ENCODE measurements at regions of chr5 and their contacts with region 1.

Region 1: DNA sequence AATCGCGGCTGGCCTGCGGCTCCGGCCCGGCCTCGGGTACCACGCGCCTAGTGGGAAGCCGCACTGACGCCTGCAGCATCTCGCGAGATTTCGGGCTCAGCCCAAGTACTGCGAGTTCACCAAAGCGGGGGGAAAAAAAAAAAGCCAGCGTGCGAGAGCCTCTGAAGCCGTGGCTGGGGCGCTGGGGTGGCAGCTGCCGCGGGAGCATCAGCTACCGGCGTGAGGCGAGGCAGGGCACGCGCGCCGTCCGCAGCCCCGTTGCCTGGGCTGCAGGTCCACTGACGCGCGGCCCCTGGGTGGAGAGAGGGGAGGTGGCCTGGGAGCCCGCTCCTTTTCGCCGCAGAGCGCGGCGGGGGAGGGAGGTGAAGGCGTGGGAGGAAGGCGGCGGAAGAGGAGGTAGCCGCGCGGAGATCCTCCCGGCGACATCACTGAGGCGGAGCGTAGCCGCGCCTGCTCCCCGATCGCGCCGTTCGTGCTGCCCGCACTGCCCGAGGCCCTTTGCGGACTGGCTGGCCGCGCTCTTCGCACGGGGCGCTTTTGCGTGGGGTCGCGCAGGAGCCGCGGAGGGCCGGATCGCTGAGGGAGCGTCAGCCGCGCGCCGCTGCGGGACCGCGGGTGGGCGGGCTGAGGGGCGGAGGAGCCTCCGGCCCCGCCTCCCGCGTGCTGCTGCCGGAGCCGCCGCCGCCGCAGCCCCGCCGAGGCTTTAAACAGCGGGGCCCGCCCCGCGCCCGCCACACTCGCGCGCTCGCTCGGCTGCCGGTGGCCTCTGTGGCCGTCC is at the start of gene SLC12A2:
- DNase-seq: peak; percentile 79 to 98 (median 88)

Region 2: GRCh38 chr5:127564002-127564769 is 519.0 kb before region 1 on chr5:
- intact Hi-C with region 1: loop called (anchors 5 kb)
- DNase-seq: peak in 2 of 10 donors; percentile 37 to 43

Region 3: DNA sequence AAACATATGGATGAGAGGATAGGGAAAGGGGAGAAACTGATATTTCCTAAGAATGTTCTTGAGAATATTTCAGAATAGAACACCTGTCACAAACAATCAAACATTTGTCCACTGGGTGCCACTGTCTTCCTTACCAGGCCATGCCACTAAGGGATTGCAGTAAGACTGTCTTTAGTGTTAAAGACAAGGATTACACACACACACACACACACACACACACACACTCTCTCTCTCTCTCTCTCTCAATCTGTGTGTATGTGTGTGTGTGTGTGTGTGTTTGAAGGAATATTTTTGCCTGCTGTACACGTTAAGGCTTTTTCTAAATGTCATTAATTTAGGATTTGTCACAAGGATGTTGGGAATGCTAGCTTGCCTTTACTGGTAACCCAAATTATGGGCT is 325.6 kb before region 1 on chr5:
- intact Hi-C with region 1: loop called (anchors 10 kb)
- DNase-seq: peak in 5 of 10 donors; percentile 10 to 79 (median 26)

Region 4: GRCh38 chr5:127875235-127876021 is 207.8 kb before region 1 on chr5:
- intact Hi-C with region 1: loop called (anchors 5 kb)
- DNase-seq: peak in 7 of 10 donors; percentile 19 to 90 (median 54)

Region 5: DNA sequence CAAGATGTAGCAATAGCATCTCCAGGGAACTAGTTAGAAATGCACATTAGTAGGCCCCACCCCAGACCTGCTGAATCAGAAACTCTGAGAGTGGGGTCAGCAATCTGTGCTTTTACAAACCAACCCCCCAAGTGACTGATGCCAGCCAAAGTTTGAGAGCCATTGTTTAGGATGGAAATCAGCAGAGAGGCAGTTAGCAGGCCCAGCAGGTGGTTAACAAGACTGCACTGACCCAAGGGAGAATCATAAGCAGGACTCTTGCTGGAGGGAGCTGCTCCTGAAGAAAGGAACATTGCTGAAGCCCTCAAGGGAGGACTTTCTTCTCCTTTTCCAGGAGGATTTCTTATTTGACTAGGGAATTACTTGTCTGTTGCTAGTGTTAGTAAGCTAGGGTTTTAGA is 73.8 kb before region 1 on chr5:
- intact Hi-C with region 1: no loop called
- DNase-seq: no peak

Region 6: DNA sequence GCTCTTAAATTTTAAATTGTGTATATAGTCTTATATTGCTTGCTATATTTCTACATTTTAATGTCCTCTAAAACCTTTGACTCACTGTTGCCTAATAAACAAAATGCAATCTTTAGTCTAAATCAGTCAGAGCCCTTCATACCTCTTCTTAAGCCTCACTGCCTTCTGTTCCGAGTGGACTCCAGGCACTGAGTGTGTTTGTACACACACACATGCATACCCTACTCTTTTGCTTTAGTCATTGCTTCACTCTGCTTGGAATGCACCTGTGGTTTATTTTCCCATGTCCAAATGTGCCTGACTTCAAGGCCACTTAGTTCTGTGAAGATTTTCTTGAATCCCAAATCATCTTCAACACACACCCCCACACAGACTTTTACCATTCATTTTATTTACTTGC is 61.3 kb after region 1 on chr5:
- intact Hi-C with region 1: loop called (anchors 10 kb)
- DNase-seq: no peak

Region 7: GRCh38 chr5:128201065-128201926 is 118.1 kb after region 1 on chr5:
- intact Hi-C with region 1: loop called (anchors 2 kb)
- DNase-seq: peak; percentile 64 to 97 (median 86)